Activated B cell treated with CpG ODN at 0.5 μM for 24 hours (primary cell): ENCODE measurements at regions of chr9 and their contacts with region 1.

Region 1: GRCh38 chr9:128034821-128035764 is 32.0 kb downstream of the NAIF1 start:
- DNase-seq: peak; percentile 42
- ATAC-seq: peak; percentile 83
- H3K4me3 Mint-ChIP-seq: no peak overlapping the region
- H3K27ac Mint-ChIP-seq: peak overlapping the region; percentile 75
- H3K4me1 Mint-ChIP-seq: peaks cover 34% of the 10 kb centered on the region
- H3K27me3 Mint-ChIP-seq: no peaks in the 10 kb centered on the region
- CTCF ChIP-seq: peak; percentile 68

Region 2: GRCh38 chr9:127930231-127931091 is 104.6 kb before region 1 on chr9 and contains the start of gene PIP5KL1:
- CTCF ChIA-PET with region 1: interaction called, 7 read pairs
- POLR2A ChIA-PET with region 1: interaction called, 10 read pairs
- intact Hi-C with region 1: no loop called
- DNase-seq: peak; percentile 79
- ATAC-seq: peak; percentile 80
- H3K4me3 Mint-ChIP-seq: peak within 1 kb of the TSS; percentile 78
- H3K27ac Mint-ChIP-seq: no peak within 1 kb of the TSS
- H3K4me1 Mint-ChIP-seq: peaks cover 37% of the 10 kb centered on the region
- H3K27me3 Mint-ChIP-seq: peaks cover 3% of the 10 kb centered on the region
- CTCF ChIP-seq: no peak
- total RNA-seq, gene PIP5KL1: 1.7 and 1.8 TPM in 2 replicates

Region 3: DNA sequence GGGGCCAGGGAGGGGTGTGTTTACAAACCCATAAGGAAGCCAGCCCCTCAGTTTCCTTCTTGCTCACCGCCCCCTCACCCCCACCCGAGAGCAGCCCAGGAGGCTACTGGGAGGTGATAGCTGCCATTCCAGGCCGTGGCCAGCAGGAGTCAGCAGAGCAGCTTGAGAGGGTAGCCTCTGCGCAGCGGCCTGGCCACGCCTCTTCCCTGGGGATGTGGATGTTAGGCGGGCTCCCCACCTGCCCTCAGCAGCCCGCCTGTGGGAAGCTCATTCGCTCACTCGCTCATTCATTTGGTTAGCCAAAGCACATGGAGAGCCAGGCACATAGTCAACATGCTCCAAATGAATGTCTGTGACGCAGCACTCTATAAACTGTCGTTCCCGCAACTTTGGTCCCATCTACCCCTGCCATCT is 91.4 kb before region 1 on chr9:
- CTCF ChIA-PET with region 1: interaction called, 160 read pairs
- POLR2A ChIA-PET with region 1: interaction called, 6 read pairs
- intact Hi-C with region 1: loop called (anchors 1 kb)
- DNase-seq: peak; percentile 71
- ATAC-seq: peak; percentile 93
- H3K4me3 Mint-ChIP-seq: no peak overlapping the region
- H3K27ac Mint-ChIP-seq: peak overlapping the region; percentile 73
- H3K4me1 Mint-ChIP-seq: peaks cover 21% of the 10 kb centered on the region
- H3K27me3 Mint-ChIP-seq: no peaks in the 10 kb centered on the region
- CTCF ChIP-seq: no peak

Region 4: DNA sequence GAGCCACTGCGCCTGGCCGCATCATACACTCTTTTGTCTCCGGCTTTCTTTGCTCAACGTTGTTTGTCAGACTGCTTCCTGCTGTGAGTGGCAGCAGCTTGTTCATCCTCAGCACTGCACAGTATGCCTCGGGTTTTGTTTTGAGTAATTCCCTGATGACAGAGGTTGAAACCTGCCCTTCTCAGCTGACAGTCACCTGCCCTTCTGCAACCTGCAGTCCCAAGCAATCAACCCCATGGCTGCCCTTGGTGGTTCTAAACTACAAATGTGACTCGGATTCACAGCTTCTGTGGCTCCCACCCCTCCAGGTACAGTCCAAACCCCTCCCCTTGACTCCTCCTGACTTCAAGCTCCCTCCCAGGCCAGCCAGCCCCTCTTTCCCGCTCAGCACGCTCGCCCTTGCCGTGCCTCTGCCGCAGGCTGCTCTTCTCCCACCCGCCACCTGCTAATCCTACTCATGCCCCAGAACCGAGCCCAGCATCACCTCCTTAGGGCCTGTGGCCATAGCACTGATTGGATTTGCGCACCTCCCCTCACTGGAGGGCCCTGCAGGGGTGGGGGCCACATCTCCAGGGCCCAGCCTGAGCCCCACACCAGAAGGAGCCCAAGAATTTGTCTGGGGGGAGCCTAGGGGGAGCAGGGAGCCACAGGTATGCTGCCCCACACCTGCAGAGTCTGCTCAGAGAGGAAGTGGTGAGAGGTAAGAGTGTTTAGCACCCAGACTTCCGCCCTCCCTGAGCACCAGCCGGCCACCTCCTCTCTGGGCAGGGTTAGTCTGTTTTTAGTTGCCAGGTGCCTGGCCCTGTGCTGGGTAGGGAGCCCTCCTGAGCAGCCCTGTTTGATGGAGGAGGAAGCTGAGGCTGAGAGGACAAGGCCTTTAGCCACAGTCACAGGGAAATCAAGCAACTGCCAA is 64.4 kb before region 1 on chr9:
- CTCF ChIA-PET with region 1: interaction called, 7 read pairs
- POLR2A ChIA-PET with region 1: interaction called, 13 read pairs
- intact Hi-C with region 1: no loop called
- DNase-seq: peak; percentile 50
- ATAC-seq: peak; percentile 74
- H3K4me3 Mint-ChIP-seq: peak overlapping the region; percentile 79
- H3K27ac Mint-ChIP-seq: peak overlapping the region; percentile 97
- H3K4me1 Mint-ChIP-seq: peaks cover 100% of the 10 kb centered on the region
- H3K27me3 Mint-ChIP-seq: no peaks in the 10 kb centered on the region
- CTCF ChIP-seq: no peak

Region 5: DNA sequence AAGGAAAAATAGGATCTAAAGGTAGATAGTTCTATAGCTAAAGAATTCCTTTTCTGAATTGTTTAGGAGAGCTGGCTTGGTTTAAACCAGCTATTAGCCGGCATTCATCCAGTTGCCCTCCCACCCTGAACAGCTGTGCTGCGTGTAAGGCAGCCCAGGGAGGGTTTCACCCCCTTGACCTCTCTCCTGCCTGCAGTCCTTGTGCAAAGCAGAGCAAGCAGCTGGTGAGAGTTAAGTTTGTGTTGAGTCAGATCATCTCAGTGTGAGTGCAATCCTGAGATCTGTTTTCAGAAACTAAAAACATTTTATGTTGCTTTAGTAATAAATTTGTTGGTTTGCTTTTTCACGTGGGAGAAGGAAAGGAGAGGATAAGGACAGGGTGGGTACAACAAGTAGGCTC is 46.0 kb after region 1 on chr9:
- CTCF ChIA-PET with region 1: interaction called, 4 read pairs
- POLR2A ChIA-PET with region 1: no interaction called
- intact Hi-C with region 1: loop called (anchors 5 kb)
- DNase-seq: no peak
- ATAC-seq: no peak
- H3K4me3 Mint-ChIP-seq: no peak overlapping the region
- H3K27ac Mint-ChIP-seq: no peak overlapping the region
- H3K4me1 Mint-ChIP-seq: peaks cover 42% of the 10 kb centered on the region
- H3K27me3 Mint-ChIP-seq: no peaks in the 10 kb centered on the region
- CTCF ChIP-seq: no peak

Region 6: GRCh38 chr9:128117613-128118471 is 82.7 kb after region 1 on chr9:
- CTCF ChIA-PET with region 1: interaction called, 32 read pairs
- POLR2A ChIA-PET with region 1: interaction called, 6 read pairs
- intact Hi-C with region 1: loop called (anchors 1 kb)
- DNase-seq: peak; percentile 98
- ATAC-seq: peak; percentile 48
- H3K4me3 Mint-ChIP-seq: no peak overlapping the region
- H3K27ac Mint-ChIP-seq: peak overlapping the region; percentile 56
- H3K4me1 Mint-ChIP-seq: peaks cover 42% of the 10 kb centered on the region
- H3K27me3 Mint-ChIP-seq: no peaks in the 10 kb centered on the region
- CTCF ChIP-seq: peak; percentile 99